BJ (cell line): ENCODE measurements at regions of chr1 and their contacts with region 1.

Region 1: GRCh38 chr1:201649761-201650622 is 111.1 kb downstream of the NAV1 start:
- DNase-seq: no peak
- H3K4me3 ChIP-seq: peak overlapping the region; percentile 73
- H3K27me3 ChIP-seq: no peaks in the 10 kb centered on the region
- CTCF ChIP-seq: peak; percentile 27; the same call in 1 of the 2 replicates

Region 2: DNA sequence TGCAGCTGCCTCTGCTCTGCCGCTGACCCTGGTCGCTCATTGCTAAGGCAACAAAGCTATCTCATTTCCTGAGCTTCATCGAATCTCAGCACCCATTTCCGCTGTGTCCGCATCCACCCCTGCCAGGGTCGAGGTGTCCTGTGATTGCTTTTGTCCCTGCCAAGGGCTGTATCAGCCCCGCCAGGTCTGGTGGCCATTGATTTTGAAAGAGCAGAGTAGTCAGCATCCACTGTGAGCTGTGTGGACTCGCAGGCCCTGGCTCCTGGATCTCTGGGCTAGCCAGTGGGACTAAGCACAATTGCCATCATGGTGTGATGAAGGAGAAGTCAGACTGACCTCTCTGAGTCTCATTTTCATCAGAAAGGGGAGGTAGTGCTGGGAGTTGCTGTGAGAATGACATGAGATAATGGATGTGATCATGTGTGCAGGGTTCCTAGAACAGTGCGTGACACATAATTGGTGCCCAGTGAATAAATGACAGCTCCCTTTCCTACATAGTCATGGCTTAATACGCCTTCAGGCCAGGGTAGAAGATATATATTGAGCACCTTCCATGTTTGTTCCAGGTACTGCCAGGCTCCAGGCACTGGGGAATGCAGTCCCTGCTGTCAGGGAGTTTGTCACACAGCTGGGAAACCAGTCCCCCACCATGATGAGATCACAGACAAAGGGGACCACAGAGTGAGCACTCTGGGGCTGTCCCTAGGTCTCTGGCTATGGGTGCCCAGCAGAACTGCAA is 78.9 kb before region 1 on chr1:
- CTCF ChIA-PET with region 1: no interaction called
- POLR2A ChIA-PET with region 1: no interaction called
- DNase-seq: no peak
- H3K4me3 ChIP-seq: no peak overlapping the region
- H3K27me3 ChIP-seq: no peaks in the 10 kb centered on the region
- CTCF ChIP-seq: no peak

Region 3: DNA sequence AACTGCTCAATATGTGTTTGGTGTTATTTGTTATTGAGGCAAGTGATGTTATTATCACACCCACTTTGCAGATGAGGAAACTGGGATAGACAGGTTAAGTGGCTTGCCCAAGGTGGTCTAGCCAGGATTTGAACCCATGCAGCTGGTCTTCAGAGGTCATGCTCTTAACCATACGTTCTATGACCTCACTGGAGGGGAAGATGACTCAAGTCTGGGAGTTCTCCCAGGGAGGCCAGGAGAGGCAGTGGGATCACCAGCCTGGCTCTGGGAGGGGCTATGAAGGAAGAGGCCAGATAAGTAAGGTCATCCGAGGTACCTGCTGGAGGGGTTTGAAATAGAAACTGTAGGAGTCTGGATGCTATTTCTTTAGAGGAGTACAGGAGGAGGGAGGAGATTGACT is 15.7 kb before region 1 on chr1:
- CTCF ChIA-PET with region 1: interaction called, 11 read pairs
- POLR2A ChIA-PET with region 1: interaction called, 25 read pairs
- DNase-seq: no peak
- H3K4me3 ChIP-seq: no peak overlapping the region
- H3K27me3 ChIP-seq: no peaks in the 10 kb centered on the region
- CTCF ChIP-seq: no peak

Region 4: DNA sequence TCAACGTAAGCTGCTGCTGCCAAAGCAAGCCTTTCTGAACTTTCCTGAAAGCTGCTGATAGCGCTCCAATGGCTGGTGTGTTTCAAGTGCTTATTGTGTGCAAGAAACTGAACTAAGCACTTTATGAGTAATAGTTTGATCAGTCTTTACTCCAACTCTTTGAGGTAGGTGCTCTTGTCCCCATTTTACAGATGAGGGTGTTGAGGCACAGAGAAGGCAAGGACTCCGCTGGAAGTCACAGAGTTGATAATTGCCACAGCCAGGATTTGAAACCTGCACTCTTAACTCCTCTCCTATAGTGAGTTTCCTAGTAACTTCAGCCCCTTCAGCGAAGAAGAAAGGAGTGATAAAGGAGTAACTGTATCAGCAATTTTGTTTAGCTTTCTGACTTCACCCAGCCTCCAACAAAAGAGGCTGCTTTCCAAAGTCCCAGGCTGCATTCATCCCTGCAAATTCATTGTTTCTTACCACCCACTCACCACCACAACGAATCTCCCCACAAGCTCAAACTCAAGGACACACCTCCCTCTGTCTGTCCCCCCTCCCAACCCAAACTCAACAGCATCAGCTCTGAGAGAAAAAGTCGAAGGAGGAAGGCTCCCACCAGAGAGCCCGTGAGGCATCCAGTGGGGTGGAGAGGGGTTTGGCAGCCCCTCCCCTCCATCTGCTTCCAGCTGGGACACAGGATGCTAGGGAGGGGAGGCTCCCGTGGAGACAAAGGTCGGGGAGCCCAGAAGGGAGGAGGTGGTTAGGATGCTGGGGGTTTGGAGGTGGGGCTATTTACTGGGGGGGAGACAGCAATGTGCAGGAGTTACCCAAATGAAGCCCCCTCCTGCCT is 28.5 kb after region 1 on chr1:
- CTCF ChIA-PET with region 1: interaction called, 6 read pairs
- POLR2A ChIA-PET with region 1: interaction called, 10 read pairs
- DNase-seq: no peak
- H3K4me3 ChIP-seq: no peak overlapping the region
- H3K27me3 ChIP-seq: no peaks in the 10 kb centered on the region
- CTCF ChIP-seq: no peak

Region 5: DNA sequence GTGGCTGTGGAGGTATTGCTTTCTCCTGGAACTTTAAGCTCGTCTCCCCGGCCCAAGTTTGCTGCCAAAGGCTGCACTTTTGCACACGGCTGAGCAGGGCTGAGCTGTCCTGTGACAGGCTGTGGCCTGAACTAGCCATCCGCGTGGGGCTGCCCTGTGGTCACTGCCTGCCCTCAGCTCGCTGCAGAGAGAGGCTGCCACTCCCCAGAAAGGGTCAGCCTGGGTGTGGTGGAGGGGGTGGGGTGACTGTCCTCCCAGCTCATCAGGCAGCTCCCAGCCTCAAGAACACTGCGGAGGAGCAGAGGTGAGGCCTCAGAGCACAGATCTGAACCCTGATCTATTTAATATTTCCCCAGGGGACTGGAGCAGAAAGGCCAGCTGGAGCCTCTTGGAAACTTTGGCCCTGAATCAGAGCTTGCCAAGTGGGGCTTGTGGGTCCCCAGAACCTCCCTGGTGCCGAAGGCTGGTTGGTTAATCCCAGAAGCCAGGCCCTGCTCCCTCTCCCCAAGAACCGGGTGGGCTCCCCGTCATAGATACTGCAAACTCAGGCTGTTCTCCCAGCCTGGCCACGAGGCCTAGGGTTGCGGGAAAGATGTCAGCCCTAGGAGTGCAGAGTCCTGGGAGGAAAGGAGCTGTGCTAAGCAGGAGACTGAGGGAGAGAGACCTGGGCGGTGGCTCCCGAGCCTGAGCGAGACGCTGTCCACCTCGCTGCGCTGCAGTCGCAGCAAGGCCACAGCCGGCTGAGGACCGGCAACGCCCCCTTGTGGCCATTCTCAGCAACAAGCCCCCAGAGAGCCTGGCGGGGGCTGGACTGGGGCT is 53.8 kb after region 1 on chr1:
- CTCF ChIA-PET with region 1: interaction called, 20 read pairs
- POLR2A ChIA-PET with region 1: no interaction called
- DNase-seq: no peak
- H3K4me3 ChIP-seq: no peak overlapping the region
- H3K27me3 ChIP-seq: no peaks in the 10 kb centered on the region
- CTCF ChIP-seq: peak; percentile 96

Region 6: DNA sequence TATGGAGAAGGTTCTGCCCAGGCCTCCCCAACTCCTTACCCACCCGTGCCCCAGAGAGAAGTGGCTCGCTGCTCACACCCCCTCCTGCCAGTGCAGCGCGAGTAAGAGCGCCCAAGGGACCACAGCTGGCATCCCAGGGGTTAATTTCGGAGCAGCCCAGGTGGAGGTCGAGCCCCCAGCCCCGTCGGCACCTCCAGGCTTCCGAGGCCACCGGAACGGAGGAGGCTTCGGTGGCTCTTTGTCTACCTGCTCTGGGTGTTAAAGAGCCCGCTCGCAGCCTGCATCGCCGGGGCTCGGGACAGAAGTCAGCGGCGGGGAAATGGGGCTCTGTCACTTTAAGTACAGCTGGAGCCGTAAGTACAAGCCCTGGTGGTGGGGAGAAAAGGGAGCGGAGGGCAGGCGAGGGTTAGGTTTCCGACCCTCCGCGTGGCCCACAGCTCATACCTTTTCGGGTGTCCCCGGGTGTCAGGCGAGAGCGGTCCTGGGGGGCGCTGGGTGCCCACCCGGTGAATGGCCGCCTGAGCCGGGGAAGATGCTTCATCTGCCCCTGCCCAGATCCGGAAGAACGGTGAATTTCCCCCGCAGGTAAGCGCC is 89.6 kb after region 1 on chr1:
- CTCF ChIA-PET with region 1: no interaction called
- POLR2A ChIA-PET with region 1: no interaction called
- DNase-seq: no peak
- H3K4me3 ChIP-seq: peak overlapping the region; percentile 60
- H3K27me3 ChIP-seq: no peaks in the 10 kb centered on the region
- CTCF ChIP-seq: 0 out of 2 replicates have a peak, but pooled peaks have one; percentile 2